Natural killer cell (primary cell): ENCODE measurements at regions of chr12 and their contacts with region 1.

Region 1: DNA sequence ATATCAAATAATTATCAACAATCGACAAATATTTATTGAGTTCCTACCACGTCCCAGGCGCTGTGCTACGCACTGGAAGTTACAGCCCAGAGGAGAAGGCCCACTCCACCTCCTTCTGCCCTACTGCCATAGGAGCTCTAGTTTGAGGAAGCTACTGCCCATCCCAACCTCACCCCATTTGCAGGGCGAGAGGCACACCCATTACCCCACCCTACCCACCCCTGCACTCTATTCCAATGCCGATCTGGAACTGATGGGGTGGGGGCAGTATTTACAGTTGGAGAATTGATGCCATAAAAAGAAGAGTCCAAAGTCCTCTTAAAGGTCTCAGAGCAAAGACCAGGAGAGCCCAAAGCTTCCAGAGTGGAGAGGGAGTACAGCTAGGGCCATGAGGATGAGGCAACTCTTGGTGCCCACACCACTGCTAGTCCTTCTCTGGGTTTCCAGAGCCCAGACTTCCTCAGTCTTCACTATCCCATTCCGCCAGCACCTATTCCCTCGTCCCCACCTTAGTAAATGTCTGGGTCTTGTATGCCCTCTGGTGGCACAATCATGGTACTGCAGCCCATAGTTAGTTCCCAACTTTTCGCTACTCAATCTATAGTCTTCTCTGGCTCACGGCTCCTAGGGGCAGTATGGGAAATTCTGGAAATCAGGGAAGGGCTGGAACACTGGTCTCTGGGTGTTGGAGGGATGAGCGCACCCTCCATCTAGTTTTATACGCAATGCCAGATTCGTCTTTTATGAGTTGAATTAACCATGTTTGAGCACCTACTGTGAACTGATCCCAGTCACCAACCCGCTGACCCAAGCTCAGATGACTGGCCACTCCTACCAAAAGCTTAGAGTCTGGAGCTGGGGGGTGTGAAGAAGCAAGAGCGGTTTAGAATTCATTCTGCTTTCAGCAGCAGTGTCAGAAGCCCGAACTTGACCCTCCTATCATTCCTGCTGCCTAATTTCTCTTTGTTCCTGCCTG is 6.9 kb upstream of the ADCY6 start:
- DNase-seq: peak; percentile 42 to 80
- ATAC-seq: peak; percentile 76 to 92 (median 89)
- H3K4me3 ChIP-seq: no peak overlapping the region
- H3K4me3 Mint-ChIP-seq: no peak overlapping the region
- H3K27ac ChIP-seq: no peak overlapping the region
- H3K27ac Mint-ChIP-seq: no peak overlapping the region
- H3K4me1 ChIP-seq: peaks cover 4% of the 10 kb centered on the region
- H3K4me1 Mint-ChIP-seq: peaks cover 8 to 19% of the 10 kb centered on the region in 2 donors
- H3K27me3 ChIP-seq: no peaks in the 10 kb centered on the region
- H3K27me3 Mint-ChIP-seq: peaks cover 0 to 10% of the 10 kb centered on the region in 2 donors
- CTCF ChIP-seq: peak; percentile 93

Region 2: GRCh38 chr12:48758221-48758620 is 37.5 kb before region 1 on chr12:
- intact Hi-C with region 1: loop called (anchors 1 kb)
- DNase-seq: no peak
- ATAC-seq: no peak
- H3K4me3 ChIP-seq: no peak overlapping the region
- H3K4me3 Mint-ChIP-seq: no peak overlapping the region
- H3K27ac ChIP-seq: no peak overlapping the region
- H3K27ac Mint-ChIP-seq: no peak overlapping the region
- H3K4me1 ChIP-seq: peaks cover 5% of the 10 kb centered on the region
- H3K4me1 Mint-ChIP-seq: peaks cover 0 to 3% of the 10 kb centered on the region in 2 donors
- H3K27me3 ChIP-seq: no peaks in the 10 kb centered on the region
- H3K27me3 Mint-ChIP-seq: peaks cover 3 to 4% of the 10 kb centered on the region in 2 donors
- CTCF ChIP-seq: no peak